ENCODE measurements at regions of chr10 and their contacts with region 1.

Region 1: DNA sequence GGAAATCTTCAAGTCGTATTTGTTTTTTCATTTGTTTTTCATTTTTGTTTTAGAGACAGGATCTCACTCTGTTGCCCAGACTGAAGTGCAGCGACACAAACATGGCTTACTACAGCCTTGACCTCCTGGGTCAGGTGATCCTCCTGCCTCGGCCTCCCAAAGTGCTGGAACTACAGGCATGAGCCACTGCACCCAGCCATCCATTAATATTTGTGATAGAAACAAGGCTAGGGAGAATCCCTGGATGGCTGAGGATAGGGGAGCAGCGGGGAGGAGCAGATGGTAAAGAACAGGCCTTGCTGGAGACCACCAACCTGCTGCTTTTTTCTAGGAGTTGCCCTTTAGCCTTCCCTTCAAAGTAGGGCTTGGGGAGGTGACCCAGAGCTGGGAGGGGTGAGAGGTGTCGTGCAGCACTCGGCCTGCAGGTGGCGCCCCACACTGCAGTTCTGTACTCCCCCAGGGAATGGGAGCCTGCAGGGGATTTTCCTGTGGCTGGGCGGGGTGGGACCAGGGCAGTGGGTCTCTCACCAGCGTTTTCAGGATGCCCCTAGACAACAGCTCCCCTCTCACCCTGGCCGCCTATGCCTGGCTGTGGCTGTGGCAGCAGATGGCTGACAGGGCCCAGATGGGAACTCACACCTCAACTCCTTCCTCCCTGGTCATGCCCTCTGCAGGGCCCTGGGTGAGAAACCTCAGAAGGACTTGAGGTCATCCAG is 12.6 kb upstream of the CDH23 start:
- DNase-seq: peak; percentile 91

Region 2: GRCh38 chr10:70913191-70913892 is 470.8 kb before region 1 on chr10:
- intact Hi-C with region 1: no loop called
- DNase-seq: peak; percentile 47

Region 3: DNA sequence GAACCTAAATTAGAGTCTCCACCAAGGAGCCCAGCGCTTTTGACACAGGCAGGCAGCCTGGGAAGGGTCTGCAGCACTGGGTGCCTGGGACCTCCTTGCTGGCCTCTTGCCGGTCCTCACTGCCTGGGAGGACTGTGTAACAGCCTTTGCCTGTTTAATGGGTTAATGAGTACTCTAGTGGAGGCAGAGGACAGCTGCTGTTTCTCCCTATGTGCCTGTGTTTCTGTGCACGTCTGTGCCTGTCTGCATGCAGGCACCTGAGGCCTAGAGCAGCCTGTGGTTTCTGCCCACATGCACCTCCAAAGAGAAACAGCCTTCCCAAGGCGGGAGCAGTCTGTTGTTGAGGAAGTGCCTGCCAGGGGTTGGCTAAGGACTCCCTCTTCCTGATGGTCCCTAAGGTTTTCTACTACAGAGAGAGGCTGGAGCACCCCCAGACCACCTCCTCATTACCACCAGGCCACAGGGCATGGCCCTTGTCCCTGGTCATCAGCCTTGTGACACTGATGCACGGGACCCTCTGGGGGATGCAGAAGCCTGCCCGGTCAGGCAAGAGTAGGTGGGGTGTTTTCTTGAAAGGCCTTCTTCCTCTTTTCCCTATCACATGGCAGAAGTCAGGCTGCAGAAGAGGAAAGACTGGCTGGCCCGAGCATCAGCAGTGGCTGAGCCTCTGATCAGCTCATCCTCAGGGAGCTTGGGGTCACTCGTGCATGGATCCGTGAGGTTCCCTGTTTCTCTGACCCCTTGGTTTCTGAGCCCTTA is 50.8 kb before region 1 on chr10:
- intact Hi-C with region 1: no loop called
- DNase-seq: no peak

Region 4: GRCh38 chr10:71634531-71635164 is 250.5 kb after region 1 on chr10:
- intact Hi-C with region 1: no loop called
- DNase-seq: no peak

Region 5: DNA sequence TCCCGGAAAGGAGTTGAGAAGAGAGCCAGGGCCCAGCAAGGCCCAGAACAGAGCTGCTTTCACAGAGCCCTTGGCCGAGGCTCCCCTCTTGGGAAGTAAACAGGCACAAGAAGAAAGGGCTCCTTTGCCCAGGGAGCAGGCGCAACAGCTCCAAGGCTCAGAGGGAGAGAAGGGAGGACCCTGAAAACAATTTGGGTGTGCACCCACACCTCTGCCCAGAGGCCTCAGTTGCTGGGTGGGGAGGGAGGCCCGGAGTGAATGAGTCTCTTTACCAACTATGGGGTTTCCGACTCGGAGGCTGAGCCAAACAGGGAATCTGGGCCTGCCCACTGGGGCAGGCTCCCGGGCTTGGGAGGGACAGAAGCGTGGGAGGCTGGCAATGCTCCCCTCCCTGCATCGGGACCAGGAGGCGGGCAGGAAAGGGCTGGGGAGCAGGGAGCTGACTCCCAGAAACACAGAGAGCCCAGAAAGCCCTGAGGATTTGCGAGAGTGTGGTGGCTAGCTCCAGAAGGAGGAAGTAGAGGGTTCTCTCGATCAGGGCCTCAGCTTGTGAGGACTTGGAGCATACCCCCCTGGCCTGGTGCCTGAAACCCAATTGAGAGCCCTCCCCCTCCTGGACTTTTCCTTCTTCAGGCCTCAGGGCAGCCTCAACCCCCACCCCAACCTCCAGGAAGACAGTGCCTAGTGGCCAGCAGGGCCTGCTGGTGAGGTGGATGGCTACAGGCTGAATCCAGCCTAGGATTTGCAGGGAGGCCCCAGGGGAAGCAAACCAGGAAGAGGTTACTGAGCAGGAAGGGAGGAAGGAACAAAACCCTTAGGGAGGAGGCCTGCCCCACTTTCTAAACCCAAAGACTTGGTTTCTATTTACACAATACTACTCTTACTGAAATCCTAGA is 329.3 kb after region 1 on chr10:
- intact Hi-C with region 1: loop called in 1 of 2 experiments (anchors 10 kb)
- DNase-seq: peak; percentile 96